ENCODE measurements at regions of chr3 and their contacts with region 1.

Region 1: GRCh38 chr3:113696658-113697499 is 437 bp upstream of the USF3 start:
- DNase-seq: peak; percentile 99
- H3K4me3 Mint-ChIP-seq: no peak overlapping the region
- H3K27ac Mint-ChIP-seq: no peak overlapping the region
- H3K4me1 Mint-ChIP-seq: peaks cover 25% of the 10 kb centered on the region
- H3K27me3 Mint-ChIP-seq: no peaks in the 10 kb centered on the region

Region 2: GRCh38 chr3:113514265-113514769 is 182.6 kb before region 1 on chr3:
- CTCF ChIA-PET with region 1: no interaction called
- intact Hi-C with region 1: loop called (anchors 1 kb)
- DNase-seq: no peak
- H3K4me3 Mint-ChIP-seq: no peak overlapping the region
- H3K27ac Mint-ChIP-seq: no peak overlapping the region
- H3K4me1 Mint-ChIP-seq: peaks cover 12% of the 10 kb centered on the region
- H3K27me3 Mint-ChIP-seq: peaks cover 12% of the 10 kb centered on the region

Region 3: GRCh38 chr3:113606539-113607218 is 90.2 kb before region 1 on chr3:
- CTCF ChIA-PET with region 1: no interaction called
- intact Hi-C with region 1: loop called (anchors 1 kb)
- DNase-seq: peak; percentile 74
- H3K4me3 Mint-ChIP-seq: peak overlapping the region; percentile 27
- H3K27ac Mint-ChIP-seq: peak overlapping the region; percentile 46
- H3K4me1 Mint-ChIP-seq: peaks cover 21% of the 10 kb centered on the region
- H3K27me3 Mint-ChIP-seq: no peaks in the 10 kb centered on the region

Region 4: DNA sequence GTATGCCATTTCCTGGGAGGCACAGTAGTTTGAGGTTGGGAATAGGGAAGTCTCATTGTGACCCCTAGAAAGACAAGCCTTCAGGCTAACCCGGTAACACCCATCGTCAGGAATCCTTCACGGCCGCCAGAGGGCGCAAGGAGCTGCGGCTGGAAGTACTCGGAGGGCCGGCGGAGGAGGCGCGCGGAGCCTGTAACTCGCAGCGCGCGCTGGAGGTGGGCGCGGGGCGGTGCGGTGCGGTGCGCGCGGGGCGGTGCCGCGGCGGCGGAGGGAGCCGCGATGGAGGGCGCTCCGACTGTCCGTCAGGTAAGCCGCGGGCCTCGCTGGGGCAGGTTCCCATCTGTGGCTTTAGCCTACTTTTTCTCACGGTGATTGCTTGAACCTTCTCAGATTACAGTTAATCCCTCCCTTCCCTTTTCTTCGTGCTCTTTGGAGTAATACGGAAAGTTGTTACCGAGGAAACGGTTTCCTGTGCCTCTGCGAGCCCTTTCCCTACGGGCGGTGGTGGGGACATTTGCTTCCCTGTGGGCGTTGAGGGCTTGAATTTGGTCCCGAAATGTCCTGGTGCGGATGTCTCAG is 141.8 kb after region 1 on chr3 and contains the start of gene GRAMD1C:
- CTCF ChIA-PET with region 1: interaction called, 4 read pairs
- intact Hi-C with region 1: loop called (anchors 1 kb)
- DNase-seq: peak; percentile 89
- H3K4me3 Mint-ChIP-seq: peak within 1 kb of the TSS; percentile 75
- H3K27ac Mint-ChIP-seq: no peak within 1 kb of the TSS
- H3K4me1 Mint-ChIP-seq: peaks cover 6% of the 10 kb centered on the region
- H3K27me3 Mint-ChIP-seq: no peaks in the 10 kb centered on the region
- total RNA-seq, gene GRAMD1C: 0.67 to 1.3 TPM

Region 5: DNA sequence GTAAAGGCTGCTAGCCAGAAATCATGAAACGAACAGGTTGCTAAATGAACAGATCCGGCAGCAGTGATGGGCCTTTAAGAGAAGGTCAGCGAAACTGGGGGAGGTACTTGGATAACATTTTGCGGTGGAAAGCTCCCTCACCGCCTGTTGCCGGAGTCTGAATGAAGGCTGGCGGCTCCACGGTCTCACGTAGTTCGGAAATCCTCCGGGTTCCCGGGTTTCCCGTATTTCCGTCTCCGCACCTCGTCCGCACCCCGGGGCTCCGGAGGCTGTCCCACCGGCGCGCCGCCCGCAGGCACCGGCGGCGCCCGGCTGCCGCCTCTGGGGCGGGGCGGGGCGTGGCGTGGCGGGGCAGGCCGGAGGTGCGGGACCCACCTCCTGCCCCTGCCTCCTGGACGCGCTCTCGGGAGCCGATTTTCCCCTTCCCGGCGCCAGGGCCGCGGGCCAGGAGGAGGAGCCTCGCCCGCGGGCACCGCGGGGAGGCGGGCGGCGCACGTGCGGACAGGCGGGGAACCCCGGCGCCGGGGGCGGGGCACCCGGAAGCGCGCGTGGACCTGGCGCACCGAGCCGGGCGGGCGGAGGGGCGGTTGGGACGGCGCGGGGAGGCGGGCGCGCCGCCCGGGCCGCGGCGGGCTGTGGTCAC is 250.6 kb after region 1 on chr3 and contains the start of gene ZDHHC23:
- CTCF ChIA-PET with region 1: no interaction called
- intact Hi-C with region 1: loop called (anchors 1 kb)
- DNase-seq: peak; percentile 61
- H3K4me3 Mint-ChIP-seq: peak within 1 kb of the TSS; percentile 68
- H3K27ac Mint-ChIP-seq: no peak within 1 kb of the TSS
- H3K4me1 Mint-ChIP-seq: peaks cover 11% of the 10 kb centered on the region
- H3K27me3 Mint-ChIP-seq: peaks cover 13% of the 10 kb centered on the region
- total RNA-seq, gene ZDHHC23: 5.4 TPM